Esophagus squamous epithelium (tissue), 5 donors: ENCODE measurements at regions of chr2 and their contacts with region 1.

Region 1: DNA sequence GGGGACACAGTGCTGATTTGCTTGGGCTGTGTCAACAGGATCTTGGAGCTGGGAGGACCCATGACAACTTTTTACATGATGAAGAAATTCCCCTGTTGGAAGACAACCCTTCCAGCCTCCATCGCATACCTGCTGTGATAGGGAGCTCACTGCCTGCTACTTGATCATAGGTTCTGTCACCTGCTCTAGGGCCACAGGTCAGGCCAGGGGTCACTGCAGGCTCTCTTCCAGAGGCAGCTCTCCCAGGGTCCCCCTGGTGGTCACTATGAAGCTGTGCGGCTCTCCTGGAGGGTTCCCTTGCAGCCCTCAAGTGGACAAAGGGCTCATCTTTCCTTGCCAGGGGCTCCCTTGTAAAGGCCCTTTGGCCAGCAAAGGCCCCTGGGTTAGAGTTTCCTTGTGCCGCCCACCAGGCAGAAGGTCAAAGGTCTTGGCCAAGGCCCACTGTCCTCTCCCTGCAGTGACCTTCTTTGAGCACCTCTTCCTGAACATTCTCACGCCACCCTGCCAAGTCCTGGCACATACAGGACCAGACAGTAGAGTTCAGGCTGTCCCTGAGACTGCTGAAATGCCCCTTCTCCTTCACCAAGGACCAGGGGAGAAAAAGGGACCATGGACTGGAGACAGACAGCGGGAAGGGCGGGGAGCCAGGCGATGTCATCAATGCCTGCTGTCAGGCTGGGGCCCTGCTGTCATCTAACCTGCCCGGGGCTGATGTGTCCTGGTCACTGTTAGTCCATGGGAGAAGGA is 345.1 kb downstream of the DYSF start:
- DNase-seq: no peak
- H3K4me3 ChIP-seq: no peak overlapping the region
- H3K27ac ChIP-seq: no peak overlapping the region
- H3K4me1 ChIP-seq: peaks cover 0 to 9% (median 3%) of the 10 kb centered on the region in 3 donors
- H3K27me3 ChIP-seq: no peaks in the 10 kb centered on the region
- CTCF ChIP-seq: peak in 5 of 6 experiments; percentile 62 to 83 (median 74)
- POLR2A ChIP-seq: no peak

Region 2: DNA sequence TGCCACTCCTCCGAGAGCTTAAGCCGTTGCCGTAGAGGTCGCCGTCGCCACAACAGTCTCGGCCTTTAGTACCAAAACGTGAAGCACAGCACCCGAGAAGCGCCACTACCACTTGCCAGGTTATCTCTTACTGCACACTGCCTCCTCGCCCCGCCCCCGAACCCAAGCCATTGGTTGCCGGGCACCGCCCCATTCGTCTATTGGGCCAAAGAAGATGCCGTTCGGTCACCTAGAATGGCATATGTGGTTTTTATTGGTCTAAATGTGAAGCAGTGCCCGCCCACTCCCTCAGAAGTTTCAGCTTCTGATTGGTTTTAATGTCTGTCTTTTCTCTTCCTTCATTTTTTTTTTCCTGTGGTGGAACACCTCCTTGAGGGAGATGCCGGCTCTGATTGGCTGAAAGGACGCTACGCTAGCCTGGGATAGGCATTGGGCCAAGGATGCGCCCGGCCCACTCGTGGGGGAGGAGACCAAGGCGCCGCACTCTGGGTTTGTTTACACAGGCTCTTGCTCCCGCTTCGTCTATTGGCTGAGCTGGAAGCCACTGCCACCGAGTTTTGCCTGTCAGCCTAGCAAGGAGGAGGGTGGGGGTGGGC is 571.4 kb before region 1 on chr2 and contains the start of gene PAIP2B:
- intact Hi-C with region 1: no loop called
- DNase-seq: peak; percentile 94
- H3K4me3 ChIP-seq: peak within 1 kb of the TSS; percentile 72 to 99 (median 92)
- H3K27ac ChIP-seq: peak within 1 kb of the TSS; percentile 86 to 97 (median 90)
- H3K4me1 ChIP-seq: peaks cover 0 to 30% (median 13%) of the 10 kb centered on the region in 3 donors
- H3K27me3 ChIP-seq: peaks cover 0 to 9% (median 0%) of the 10 kb centered on the region in 4 donors
- CTCF ChIP-seq: peak in 2 of 6 experiments; percentile 1 to 4
- POLR2A ChIP-seq: peak in 3 of 4 donors; percentile 80 to 90 (median 82)
- total RNA-seq, gene PAIP2B: 6.5 to 13.9 (median 9.9) TPM

Region 3: DNA sequence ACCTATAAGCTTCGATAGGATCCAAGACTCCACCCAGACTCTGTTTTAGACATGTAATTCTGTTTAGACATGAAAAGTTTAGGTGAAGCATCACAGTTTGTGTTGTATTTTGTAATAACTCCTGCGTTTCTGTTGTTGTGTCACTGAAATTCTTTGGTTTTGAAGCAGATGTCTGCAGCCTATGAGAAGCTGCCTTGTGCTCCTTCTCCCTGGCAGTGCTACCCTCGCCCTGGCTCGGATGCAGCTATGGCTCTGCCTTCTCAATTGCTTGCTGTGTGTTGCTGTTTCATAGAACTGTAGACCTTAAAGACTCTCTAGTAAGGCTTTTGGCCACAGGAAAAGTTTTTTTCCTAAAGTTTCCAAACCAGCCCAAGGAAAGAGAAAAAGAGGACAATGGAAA is 507.0 kb before region 1 on chr2:
- intact Hi-C with region 1: no loop called
- DNase-seq: no peak
- H3K4me3 ChIP-seq: no peak overlapping the region
- H3K27ac ChIP-seq: no peak overlapping the region
- H3K4me1 ChIP-seq: no peaks in the 10 kb centered on the region
- H3K27me3 ChIP-seq: peaks cover 0 to 4% (median 0%) of the 10 kb centered on the region in 4 donors
- CTCF ChIP-seq: no peak
- POLR2A ChIP-seq: no peak

Region 4: DNA sequence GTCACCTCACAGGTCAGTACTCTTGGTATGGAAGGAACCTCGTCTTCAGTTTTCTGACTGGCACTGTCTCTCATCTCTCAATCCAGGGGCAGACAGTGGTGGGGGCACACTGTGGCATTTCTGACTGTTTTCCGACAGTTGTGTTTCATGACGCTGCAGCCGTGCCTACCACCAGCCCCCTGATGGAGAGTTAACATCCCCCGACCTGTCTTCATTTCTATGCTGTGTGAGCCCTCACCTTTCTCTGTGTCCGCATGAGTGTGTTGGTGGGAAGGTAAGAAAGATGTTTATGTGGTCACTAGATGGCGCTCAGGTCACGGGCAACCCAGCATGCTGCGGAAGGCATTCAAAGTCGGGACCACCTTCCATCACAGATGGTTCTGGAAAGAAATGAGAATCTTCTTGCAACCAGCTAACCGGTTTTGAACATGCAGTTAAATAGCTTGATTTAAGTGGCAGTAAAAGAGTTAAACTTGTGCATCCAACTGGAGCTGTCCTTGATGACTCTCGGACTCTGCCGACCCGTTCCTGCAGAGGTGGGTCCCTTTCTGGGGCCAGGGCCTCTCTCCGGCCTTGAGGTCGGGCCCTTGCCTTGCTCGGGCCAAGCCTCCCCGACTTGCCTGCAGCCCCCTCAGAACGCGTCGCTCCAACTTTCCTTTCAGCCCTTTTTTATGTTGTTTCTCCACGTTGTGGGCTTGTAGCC is 252.7 kb before region 1 on chr2:
- intact Hi-C with region 1: loop called (anchors 10 kb)
- DNase-seq: no peak
- H3K4me3 ChIP-seq: peak overlapping the region in 2 of 4 donors; percentile 26 to 29
- H3K27ac ChIP-seq: peak overlapping the region in 2 of 4 donors; percentile 52 to 70
- H3K4me1 ChIP-seq: peaks cover 0 to 13% (median 3%) of the 10 kb centered on the region in 3 donors
- H3K27me3 ChIP-seq: peaks cover 0 to 24% (median 0%) of the 10 kb centered on the region in 4 donors
- CTCF ChIP-seq: peak; percentile 30 to 68 (median 50)
- POLR2A ChIP-seq: no peak

Region 5: GRCh38 chr2:71889991-71890684 is 91.7 kb after region 1 on chr2:
- intact Hi-C with region 1: no loop called
- DNase-seq: no peak
- H3K4me3 ChIP-seq: no peak overlapping the region
- H3K27ac ChIP-seq: no peak overlapping the region
- H3K4me1 ChIP-seq: no peaks in the 10 kb centered on the region
- H3K27me3 ChIP-seq: peaks cover 0 to 7% (median 0%) of the 10 kb centered on the region in 4 donors
- CTCF ChIP-seq: no peak
- POLR2A ChIP-seq: no peak